ENCODE measurements at regions of chr10 and their contacts with region 1.

Region 1: DNA sequence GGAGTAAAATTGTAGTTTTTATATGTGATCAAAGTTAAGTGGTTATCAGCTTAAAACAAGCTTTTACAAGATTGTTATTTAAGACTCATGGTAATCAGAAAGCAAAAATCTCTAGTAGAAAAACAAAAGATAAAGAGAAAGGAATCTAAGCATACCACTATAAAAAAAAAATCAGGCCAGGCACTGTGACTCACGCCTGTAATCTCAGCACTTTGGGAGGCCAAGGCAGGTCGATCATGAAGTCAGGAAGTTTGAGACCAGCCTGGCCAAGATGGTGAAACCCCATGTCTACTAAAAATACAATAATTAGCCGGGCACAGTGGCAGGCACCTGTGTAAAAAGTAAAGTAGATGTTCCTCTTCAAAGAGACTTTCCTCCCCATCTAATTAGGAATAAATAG is 265.9 kb upstream of the NRP1 start:
- DNase-seq: peak; percentile 11
- H3K4me3 Mint-ChIP-seq: no peak overlapping the region
- H3K27ac Mint-ChIP-seq: no peak overlapping the region
- H3K4me1 Mint-ChIP-seq: peaks cover 13% of the 10 kb centered on the region
- H3K27me3 Mint-ChIP-seq: peaks cover under 1% of the 10 kb centered on the region
- CTCF ChIP-seq: no peak

Region 2: DNA sequence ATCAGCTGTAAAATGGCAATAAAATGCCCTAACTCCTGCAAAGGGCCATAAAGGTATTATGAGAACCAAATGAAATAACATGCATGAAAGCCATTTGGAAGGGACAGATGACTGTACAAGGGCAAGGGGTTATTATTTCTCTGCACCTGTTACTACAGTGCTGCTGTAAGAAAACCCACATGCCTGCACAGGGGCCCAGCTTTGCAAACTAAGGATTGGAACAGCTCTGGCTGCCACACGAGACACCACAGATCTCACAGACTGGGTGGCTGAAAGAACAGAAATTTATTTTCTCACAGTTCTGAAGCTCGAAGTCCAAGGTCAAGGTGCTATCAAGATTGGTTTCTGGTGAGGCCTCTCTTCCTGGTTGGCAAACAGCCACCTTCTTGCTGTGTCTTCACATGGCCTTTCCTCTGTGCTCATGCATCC is 143.1 kb after region 1 on chr10:
- CTCF ChIA-PET with region 1: no interaction called
- intact Hi-C with region 1: no loop called
- DNase-seq: peak; percentile 33
- H3K4me3 Mint-ChIP-seq: no peak overlapping the region
- H3K27ac Mint-ChIP-seq: no peak overlapping the region
- H3K4me1 Mint-ChIP-seq: peaks cover 22% of the 10 kb centered on the region
- H3K27me3 Mint-ChIP-seq: no peaks in the 10 kb centered on the region
- CTCF ChIP-seq: no peak

Region 3: GRCh38 chr10:33982995-33983394 is 382.6 kb after region 1 on chr10:
- CTCF ChIA-PET with region 1: no interaction called
- intact Hi-C with region 1: loop called (anchors 10 kb)
- DNase-seq: no peak
- H3K4me3 Mint-ChIP-seq: no peak overlapping the region
- H3K27ac Mint-ChIP-seq: no peak overlapping the region
- H3K4me1 Mint-ChIP-seq: peaks cover 23% of the 10 kb centered on the region
- H3K27me3 Mint-ChIP-seq: no peaks in the 10 kb centered on the region
- CTCF ChIP-seq: no peak